HAP-1 (cell line): ENCODE measurements at regions of chr1 and their contacts with region 1.

Region 1: DNA sequence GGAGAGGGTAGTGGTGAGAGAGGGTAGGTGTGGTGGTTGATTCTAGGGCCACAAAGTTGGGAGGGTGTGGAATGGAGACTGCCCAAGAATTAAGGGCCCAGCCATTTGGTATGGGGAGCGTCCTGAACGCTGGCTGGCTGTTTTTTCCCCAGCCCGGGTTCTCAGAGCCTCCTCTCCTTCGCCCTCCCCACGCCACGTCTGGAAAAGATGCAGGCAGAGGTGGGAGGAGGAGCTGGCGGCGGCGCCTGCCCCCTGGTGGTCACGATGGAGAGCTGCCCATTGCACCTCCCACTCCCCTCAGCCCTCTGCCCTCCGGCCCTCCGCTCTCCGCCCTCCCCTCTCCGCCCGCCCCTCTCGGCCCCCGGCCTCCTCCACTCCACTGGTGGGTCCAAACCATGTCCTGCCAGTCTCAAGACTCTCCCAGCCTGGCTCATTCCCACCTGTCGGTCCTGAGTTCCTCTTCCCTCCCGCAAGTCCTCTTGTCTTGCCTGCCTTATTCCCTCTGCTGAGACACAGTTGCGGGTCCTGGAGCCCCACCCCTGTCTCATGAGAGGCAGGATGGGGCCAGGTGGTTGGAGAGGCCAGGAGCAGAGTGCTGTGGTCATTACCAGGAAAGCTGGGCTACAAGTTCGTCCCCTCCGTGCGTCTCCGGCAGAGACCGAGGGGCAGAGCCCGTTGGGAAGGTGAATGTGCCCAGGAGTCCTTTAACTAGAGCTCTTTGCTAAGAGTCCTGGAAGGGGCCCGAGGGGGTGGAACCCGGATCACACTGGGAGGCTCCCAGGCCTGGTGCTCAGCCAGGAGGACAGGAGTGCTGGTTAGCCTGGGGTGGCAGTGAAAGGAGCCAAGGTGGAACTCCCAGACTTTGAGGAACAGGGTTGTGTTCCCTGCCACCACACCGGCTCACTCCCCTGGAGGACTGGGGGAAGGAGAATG is 22.6 kb downstream of the ETNK2 start:
- DNase-seq: peak; percentile 69 to 86
- H3K4me3 ChIP-seq: no peak overlapping the region
- H3K4me1 ChIP-seq: peaks cover 15% of the 10 kb centered on the region
- H3K27me3 ChIP-seq: no peaks in the 10 kb centered on the region

Region 2: DNA sequence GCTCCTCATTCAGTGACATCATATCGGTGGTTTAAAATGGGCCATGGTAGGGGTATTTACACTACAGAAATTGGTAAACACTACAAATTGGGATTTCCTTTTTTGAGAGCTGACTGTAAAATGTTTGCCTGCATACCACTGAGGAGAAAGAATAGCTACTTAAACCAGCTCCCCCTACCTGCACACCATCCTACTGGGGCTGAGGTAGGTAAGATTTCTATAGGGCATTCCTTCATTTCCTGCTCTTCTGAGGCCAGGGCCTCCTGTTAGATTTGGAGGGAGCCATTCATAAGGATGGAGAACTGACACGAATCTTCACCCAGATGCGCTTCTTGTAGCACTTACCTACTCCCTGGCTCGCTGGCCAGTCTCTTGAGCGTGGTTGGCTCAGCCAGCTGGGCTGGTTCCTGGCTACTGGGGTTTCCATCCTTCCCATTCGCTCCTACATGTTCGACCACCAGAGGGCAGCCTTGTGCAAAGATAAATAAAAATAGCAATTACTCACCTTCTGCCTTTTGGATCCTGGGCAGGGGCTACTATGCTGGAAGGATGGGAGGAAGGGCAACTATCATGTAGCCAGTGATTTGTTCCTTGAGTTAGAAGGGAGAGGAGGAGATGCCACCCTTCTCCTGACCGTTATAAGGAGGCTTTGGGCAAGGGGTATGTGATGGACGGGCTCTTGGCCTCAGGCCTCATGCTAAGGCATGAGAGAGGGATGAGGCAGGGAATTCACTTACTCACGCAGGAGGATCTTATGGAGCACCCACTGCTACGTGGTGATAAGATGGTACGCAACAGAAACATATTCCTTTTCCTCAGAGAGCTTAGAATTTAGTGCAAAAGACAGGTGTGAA is 624.6 kb before region 1 on chr1:
- in situ Hi-C with region 1: loop called (anchors 25 kb)
- DNase-seq: peak; percentile 64 to 89
- H3K4me3 ChIP-seq: no peak overlapping the region
- H3K4me1 ChIP-seq: no peaks in the 10 kb centered on the region; the same call in 1 of the 2 replicates
- H3K27me3 ChIP-seq: no peaks in the 10 kb centered on the region

Region 3: DNA sequence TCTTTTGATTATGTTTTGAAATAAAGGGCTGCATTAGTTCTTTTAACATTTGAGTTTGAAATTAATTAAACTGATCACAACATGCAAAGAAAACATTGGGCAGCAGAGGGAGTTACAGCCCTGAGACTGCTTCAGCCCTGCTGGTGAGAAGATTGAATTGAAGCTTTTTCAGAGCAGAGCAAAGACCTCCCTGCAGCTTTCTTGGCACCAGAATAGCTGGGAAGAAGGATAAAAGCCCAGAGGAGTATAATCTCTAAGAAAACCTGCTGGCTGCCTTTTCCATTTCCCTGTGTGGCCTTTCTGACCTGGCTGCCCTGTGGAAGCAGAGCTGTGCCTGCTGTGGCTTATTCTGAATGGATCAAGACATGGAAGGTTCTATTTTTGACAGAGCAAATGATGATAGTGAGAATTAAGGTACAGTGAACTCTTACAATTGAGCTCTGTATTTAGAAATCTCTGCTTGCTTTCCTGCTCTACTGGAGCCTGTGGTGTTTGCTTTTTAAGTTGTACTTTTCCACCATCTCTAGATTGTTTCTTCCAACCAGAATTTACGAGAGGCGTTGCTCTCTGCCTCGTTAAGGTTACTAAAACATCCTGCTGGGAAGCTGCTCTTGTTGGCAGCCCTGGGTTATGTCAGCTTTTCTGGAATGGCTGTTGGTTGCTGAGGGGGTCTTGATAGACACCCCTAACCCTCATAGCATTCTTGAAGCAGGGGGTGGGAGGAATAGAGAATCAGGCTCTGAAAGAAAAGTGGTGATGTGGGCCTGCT is 257.9 kb before region 1 on chr1:
- in situ Hi-C with region 1: loop called (anchors 5 kb)
- DNase-seq: peak; percentile 64 to 66
- H3K4me3 ChIP-seq: no peak overlapping the region
- H3K4me1 ChIP-seq: peaks cover 21% of the 10 kb centered on the region
- H3K27me3 ChIP-seq: no peaks in the 10 kb centered on the region